ENCODE measurements at regions of chr22 and their contacts with region 1.

Region 1: DNA sequence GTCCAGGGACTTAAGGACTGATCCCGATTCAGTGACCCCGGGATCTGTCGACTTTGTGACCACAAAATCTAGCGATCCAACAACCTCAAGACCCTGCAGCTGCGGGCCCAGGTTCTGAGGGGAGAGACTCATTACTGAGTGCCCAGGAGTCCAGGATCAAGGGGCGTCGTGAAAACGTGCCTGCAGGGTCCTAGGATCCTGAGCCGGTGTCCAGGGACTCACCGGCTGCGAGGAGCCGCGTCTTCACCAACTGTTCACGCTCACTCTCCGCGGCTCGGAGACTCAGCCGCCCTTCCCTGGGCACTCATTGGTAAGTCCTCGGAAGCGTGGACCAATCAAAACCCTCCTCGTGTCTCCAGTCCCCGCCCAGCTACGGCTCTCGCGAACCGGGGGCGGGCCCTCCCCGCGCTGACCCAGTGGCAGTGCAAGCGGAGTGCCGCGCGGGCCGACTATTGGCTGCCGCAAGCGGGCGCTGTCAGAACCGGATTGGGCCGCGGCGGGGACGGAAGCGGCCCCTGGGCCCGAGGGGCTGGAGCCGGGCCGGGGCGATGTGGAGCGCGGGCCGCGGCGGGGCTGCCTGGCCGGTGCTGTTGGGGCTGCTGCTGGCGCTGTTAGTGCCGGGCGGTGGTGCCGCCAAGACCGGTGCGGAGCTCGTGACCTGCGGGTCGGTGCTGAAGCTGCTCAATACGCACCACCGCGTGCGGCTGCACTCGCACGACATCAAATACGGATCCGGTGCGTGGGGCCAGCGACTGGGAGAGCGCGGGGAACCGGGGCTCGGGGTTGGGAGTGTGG is at the start of gene SDF2L1:
- DNase-seq: peak; percentile 97
- ATAC-seq: peak; percentile 89
- H3K4me3 ChIP-seq: peak within 1 kb of the TSS; percentile 88
- H3K27ac ChIP-seq: peak within 1 kb of the TSS; percentile 67
- H3K4me1 ChIP-seq: peaks cover 15% of the 10 kb centered on the region
- H3K27me3 ChIP-seq: no peaks in the 10 kb centered on the region
- CTCF ChIP-seq: no peak
- total RNA-seq, gene SDF2L1: 180 and 214 TPM in 2 replicates

Region 2: DNA sequence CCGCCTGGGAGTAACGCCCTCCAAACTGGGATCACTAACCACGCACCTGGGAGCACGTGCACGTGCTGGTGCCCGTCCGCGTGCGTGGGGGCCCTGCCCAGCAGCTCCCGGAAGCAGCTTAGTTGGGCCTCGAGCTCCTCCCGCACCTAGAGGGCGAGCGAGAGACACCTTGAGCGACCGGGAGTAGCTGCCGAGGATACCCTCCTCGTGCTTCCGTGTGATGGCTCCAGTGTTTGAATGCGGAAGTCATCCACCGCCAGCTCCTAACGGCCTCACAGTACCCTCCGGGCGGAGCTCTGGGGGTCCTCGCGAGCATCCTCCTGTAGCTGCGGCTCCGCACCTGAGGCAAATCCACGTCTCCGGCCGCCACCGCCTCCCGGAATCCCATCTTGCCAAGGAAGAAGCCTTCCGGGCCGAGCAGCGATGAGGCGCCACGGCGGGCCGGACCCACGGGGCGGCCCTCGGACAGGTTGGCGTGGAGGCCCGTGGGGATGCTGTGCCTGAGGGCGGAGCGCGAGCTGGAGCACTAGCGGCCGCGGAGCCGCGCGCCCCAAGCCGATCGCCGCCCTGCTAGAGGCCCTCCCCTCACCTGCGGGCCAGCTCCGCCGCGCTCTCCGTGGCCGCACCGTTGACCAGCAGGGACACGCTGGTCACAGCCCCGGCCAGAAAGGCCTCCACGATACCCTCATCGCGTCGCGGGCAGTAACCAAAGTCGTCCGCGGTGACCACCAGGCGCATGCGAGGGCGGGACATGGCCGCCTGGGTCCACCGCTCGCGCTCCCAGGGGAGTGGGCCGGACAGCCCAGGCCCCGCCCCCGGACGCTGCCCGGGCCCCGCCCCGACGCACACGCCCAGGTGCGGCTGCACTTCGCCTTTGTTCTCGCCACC is 12.5 kb before region 1 on chr22 and contains the start of gene YDJC:
- CTCF ChIA-PET with region 1: interaction called, 15 read pairs
- POLR2A ChIA-PET with region 1: interaction called, 7 read pairs
- intact Hi-C with region 1: no loop called
- DNase-seq: peak; percentile 92
- ATAC-seq: peak; percentile 89
- H3K4me3 ChIP-seq: peak within 1 kb of the TSS; percentile 96
- H3K27ac ChIP-seq: peak within 1 kb of the TSS; percentile 81
- H3K4me1 ChIP-seq: peaks cover 10% of the 10 kb centered on the region
- H3K27me3 ChIP-seq: no peaks in the 10 kb centered on the region
- CTCF ChIP-seq: peak; percentile 57
- total RNA-seq, gene YDJC: 79.4 and 122 TPM in 2 replicates

Region 3: GRCh38 chr22:21698430-21699329 is 56.7 kb after region 1 on chr22:
- CTCF ChIA-PET with region 1: no interaction called
- POLR2A ChIA-PET with region 1: interaction called, 10 read pairs
- intact Hi-C with region 1: no loop called
- DNase-seq: no peak
- ATAC-seq: no peak
- H3K4me3 ChIP-seq: no peak overlapping the region
- H3K27ac ChIP-seq: no peak overlapping the region
- H3K4me1 ChIP-seq: no peaks in the 10 kb centered on the region
- H3K27me3 ChIP-seq: no peaks in the 10 kb centered on the region
- CTCF ChIP-seq: no peak

Region 4: DNA sequence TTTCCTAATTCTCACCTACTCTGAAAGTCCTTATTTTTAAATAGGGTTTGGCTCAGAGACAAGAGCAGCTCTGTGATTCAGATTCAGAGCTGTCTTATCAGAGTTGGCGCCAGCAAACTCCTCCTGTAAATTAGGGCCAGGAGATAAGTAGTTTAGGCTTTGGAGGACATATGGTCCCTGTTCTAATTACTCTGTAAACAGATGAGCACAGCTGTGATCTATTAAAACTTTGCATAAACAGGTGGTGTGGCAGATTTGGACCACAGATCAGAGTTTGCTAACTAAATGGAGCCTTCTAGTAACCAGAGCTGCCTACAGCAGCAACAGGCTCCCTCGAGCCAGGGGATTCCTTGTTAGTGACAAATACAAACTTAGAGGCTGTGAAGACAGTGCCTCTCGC is 65.7 kb after region 1 on chr22:
- CTCF ChIA-PET with region 1: no interaction called
- POLR2A ChIA-PET with region 1: interaction called, 10 read pairs
- intact Hi-C with region 1: no loop called
- DNase-seq: no peak
- ATAC-seq: no peak
- H3K4me3 ChIP-seq: no peak overlapping the region
- H3K27ac ChIP-seq: no peak overlapping the region
- H3K4me1 ChIP-seq: peaks cover 11% of the 10 kb centered on the region
- H3K27me3 ChIP-seq: no peaks in the 10 kb centered on the region
- CTCF ChIP-seq: no peak